Caco-2 (cell line): ENCODE measurements at regions of chr17 and their contacts with region 1.

Region 1: DNA sequence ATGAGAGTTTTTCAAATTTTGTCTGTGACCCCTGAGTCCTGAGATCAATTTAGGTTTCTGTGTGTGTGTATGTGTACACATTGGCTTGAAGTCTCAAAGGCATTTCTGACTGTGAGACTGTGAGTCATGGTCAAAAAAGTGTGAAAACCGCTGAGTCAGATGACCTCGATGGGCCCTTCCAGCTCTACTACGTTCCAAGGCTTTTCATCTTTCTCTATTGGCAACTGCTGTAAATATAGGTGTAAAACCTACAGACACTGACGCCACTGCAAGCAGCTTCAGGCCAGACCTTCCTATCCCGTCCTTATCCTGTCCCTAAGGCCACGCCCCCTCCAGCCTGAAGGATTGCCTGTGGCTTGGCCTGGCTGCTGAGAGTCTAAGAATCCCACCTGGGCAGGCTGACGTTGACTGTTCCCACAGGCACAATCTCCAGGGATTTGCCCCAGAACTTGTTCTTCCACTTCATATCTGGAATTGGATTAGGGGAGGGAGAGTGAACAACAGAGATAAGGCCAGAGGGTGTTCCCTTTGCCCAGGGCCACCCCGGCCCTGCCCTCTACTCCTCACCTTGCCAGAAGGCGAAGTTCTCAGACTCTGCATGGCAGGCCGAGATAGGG is 11.3 kb downstream of the OSBPL7 start:
- DNase-seq: peak; percentile 100
- H3K4me3 ChIP-seq: no peak overlapping the region
- H3K4me3 Mint-ChIP-seq: peak overlapping the region; percentile 56
- H3K27ac Mint-ChIP-seq: peak overlapping the region; percentile 93
- H3K4me1 ChIP-seq: peaks cover 36% of the 10 kb centered on the region
- H3K4me1 Mint-ChIP-seq: peaks cover 36% of the 10 kb centered on the region
- H3K27me3 ChIP-seq: no peaks in the 10 kb centered on the region
- H3K27me3 Mint-ChIP-seq: no peaks in the 10 kb centered on the region
- CTCF ChIP-seq: no peak

Region 2: GRCh38 chr17:47821424-47822391 is 11.4 kb after region 1 on chr17 and contains the start of gene OSBPL7:
- CTCF ChIA-PET with region 1: interaction called, 10 read pairs
- POLR2A ChIA-PET with region 1: no interaction called
- intact Hi-C with region 1: loop called (anchors 1 kb)
- DNase-seq: peak; percentile 92 to 95
- H3K4me3 ChIP-seq: peak within 1 kb of the TSS; percentile 75
- H3K4me3 Mint-ChIP-seq: peak within 1 kb of the TSS; percentile 98
- H3K27ac Mint-ChIP-seq: peak within 1 kb of the TSS; percentile 92
- H3K4me1 ChIP-seq: peaks cover 9% of the 10 kb centered on the region
- H3K4me1 Mint-ChIP-seq: peaks cover 18% of the 10 kb centered on the region
- H3K27me3 ChIP-seq: no peaks in the 10 kb centered on the region
- H3K27me3 Mint-ChIP-seq: no peaks in the 10 kb centered on the region
- CTCF ChIP-seq: peak in 1 of 2 experiments; percentile 86
- total RNA-seq, gene OSBPL7: 46.8 and 48.3 TPM in 2 replicates

Region 3: DNA sequence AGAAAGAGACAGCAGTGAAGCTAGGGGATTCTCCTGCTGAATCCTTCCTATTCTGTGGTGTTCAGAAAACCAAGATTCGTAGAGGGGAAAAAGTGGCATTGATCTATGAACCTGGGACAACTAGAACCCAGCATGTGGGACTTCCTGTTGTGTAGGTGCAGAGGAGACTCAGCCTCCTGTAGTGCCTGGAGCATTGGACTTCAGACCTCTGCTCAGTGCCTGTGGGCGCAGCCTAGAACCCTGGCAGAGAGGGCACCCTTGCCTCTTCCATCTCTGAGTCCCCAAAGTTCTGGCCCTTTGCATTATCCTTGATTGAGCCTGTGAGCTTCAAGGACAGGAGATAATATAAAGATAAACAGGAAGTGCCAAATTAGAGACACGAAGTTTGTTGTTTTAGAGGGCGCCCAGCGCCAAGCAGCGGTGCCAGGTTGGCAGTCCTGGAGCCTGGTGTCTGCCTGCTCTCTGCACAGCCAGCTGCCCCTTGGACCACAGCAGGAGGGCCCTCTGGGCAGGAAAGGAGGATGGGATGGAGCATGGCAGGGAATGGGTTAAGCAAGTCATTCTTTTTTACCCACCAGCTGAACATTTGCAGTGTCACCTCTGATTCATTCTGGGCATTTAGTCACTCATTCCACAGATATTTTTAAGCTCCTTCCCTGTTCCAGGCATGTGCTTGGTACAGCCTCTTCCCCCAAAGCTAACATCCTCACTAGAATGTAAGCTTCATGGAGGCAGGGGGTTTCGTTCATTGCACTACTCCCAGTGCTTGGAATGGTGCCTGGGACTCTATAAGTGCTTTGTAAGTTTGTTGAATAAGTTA is 52.5 kb after region 1 on chr17:
- CTCF ChIA-PET with region 1: no interaction called
- POLR2A ChIA-PET with region 1: no interaction called
- intact Hi-C with region 1: no loop called
- DNase-seq: no peak
- H3K4me3 ChIP-seq: no peak overlapping the region
- H3K4me3 Mint-ChIP-seq: no peak overlapping the region
- H3K27ac Mint-ChIP-seq: peak overlapping the region; percentile 2
- H3K4me1 ChIP-seq: peaks cover 26% of the 10 kb centered on the region
- H3K4me1 Mint-ChIP-seq: peaks cover 16% of the 10 kb centered on the region
- H3K27me3 ChIP-seq: no peaks in the 10 kb centered on the region
- H3K27me3 Mint-ChIP-seq: no peaks in the 10 kb centered on the region
- CTCF ChIP-seq: no peak